Sigmoid colon (tissue), 7 donors: ENCODE measurements at regions of chr4 and their contacts with region 1.

Region 1: GRCh38 chr4:69697536-69698242 is 44.6 kb upstream of the UGT2A1 start:
- DNase-seq: no peak
- H3K4me3 ChIP-seq: no peak overlapping the region
- H3K27ac ChIP-seq: no peak overlapping the region
- H3K4me1 ChIP-seq: no peaks in the 10 kb centered on the region
- H3K27me3 ChIP-seq: no peaks in the 10 kb centered on the region
- CTCF ChIP-seq: no peak
- EP300 ChIP-seq: no peak
- POLR2A ChIP-seq: no peak

Region 2: DNA sequence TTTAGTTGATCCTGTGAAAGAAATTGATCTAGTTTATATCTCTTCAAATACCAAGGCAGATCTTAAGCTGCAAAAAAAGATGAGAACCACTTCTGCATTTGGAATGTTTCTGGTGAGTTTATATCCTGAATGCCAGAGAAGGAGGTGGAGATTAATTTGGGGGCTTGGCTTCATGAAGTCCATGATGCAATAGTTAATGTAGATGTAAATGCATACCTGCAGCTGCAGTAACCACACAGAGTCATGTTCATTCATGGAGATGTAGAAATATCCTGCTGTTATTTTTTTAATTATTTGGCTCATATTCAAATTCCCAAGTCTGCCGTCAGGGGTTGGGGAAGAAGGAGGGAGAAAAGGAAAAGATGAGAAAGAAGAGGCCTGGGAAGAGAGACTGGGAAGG is 162.4 kb after region 1 on chr4 and contains the start of gene SULT1E1:
- intact Hi-C with region 1: loop called (anchors 10 kb)
- DNase-seq: no peak
- H3K4me3 ChIP-seq: no peak within 1 kb of the TSS
- H3K27ac ChIP-seq: no peak within 1 kb of the TSS
- H3K4me1 ChIP-seq: no peaks in the 10 kb centered on the region
- H3K27me3 ChIP-seq: no peaks in the 10 kb centered on the region
- CTCF ChIP-seq: no peak
- EP300 ChIP-seq: no peak
- POLR2A ChIP-seq: no peak
- total RNA-seq, gene SULT1E1: not detected

Region 3: DNA sequence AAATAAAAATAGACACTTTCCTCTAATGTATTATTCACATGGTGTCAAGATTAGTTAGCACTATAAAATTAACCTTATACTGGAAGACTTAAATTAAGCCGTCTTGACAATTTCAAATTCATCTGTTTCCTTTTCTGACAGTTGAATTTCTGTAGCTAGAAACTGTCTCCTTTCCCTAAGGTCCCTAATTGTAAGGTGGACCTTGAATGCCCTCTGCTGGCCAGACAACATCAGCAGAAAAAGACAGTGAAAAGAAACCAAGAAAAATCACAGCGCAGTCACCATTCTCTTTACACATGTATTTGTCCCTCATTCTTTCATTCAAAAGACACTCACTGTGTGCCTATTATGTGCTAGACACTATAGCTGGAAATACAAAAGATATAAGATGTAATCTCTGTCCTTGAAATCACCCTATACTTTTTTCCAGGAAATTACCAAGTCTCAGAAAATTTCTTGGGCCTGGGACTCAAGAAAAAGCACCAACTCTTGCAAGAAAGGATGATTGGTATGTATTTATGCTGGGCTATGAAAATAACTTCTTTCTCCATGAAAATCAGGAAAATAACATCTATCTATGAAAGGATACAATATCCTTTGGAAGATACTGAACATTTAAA is 861.6 kb after region 1 on chr4:
- intact Hi-C with region 1: loop called (anchors 10 kb)
- DNase-seq: no peak
- H3K4me3 ChIP-seq: no peak overlapping the region
- H3K27ac ChIP-seq: no peak overlapping the region
- H3K4me1 ChIP-seq: peaks cover 0 to 9% (median 0%) of the 10 kb centered on the region in 4 donors
- H3K27me3 ChIP-seq: no peaks in the 10 kb centered on the region
- CTCF ChIP-seq: peak; percentile 16 to 52 (median 40)
- EP300 ChIP-seq: no peak
- POLR2A ChIP-seq: no peak